Activated B cell treated with CpG ODN at 0.5 μM for 24 hours (primary cell): ENCODE measurements at regions of chr17 and their contacts with region 1.

Region 1: DNA sequence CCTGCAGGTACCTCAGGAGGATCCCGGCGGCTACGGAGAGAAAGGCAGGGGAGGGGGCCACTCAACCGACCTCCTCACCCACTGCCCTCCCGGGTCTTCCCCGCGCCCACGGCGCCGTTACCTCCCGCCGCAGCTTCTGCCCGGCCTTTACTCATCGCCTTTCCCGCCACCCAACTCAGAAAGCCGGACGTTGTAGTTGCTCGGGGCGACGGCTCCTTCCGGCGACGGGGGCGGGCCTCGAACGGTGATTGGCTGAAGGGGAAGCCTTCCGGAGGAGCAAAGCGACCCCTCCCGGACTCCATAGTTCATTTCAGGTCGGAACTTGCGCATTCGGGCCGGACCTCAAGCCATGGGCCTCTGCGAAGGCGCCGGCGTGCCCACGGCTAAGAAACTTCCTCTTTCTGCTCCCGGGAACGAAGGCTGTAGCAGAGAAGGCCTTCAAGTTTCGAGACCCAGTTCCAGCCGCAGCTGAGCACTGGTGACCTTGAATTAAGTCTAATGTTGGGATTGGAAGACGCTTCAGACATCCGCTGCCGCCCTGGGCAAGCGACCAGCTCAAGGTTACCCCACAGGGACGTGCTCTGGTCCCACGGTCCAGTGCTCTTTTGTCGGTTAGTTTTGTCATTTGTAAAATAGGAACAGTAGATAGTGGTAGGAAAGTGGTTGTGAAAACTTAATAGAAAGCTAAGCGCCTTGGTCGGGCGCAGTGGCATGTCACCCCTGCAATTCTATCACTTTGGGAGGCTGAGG is at the start of gene PSMC3IP:
- DNase-seq: peak; percentile 86
- ATAC-seq: peak; percentile 90
- H3K4me3 Mint-ChIP-seq: peak within 1 kb of the TSS; percentile 95
- H3K27ac Mint-ChIP-seq: peak within 1 kb of the TSS; percentile 97
- H3K4me1 Mint-ChIP-seq: peaks cover 38% of the 10 kb centered on the region
- H3K27me3 Mint-ChIP-seq: no peaks in the 10 kb centered on the region
- CTCF ChIP-seq: no peak
- total RNA-seq, gene PSMC3IP: 9.0 and 10.8 TPM in 2 replicates

Region 2: DNA sequence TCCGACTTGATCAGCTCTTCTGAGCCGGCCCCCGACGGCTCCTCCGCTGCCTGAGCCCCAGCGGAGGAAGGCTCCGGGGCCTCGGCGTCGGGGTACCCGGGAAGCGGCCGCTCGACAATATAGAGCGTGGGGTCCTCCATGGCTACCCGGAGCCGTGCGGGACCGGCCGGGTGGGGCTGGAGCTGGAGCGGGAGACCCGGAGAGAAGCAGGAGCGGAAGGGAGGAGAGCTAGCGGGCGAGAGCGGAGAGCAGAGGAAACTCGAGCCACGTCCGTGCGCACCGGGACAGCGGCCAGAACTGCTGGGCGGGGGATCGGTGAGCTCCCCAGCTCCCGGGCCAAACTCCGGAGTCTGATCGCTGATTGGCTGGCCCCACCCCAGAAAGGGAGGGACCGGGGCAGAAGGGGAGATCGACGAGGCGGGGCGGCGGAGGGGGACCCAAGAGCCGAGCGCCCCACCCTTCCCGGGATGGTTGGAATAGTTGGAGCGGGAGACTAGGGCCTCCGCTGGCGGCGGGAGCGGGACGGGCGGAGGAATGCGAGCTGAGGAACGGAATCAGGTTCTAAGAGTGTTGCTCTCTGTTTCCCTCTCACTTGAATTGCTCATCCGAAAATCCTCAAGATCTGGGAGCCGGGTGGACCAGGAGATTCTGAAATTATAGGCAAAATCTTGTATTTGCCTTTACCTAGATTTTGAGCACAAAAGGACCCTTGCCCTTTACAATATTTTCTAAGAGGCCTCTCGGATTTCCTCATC is 154.6 kb before region 1 on chr17 and contains the start of gene CAVIN1:
- CTCF ChIA-PET with region 1: no interaction called
- POLR2A ChIA-PET with region 1: no interaction called
- intact Hi-C with region 1: no loop called
- DNase-seq: no peak
- ATAC-seq: peak; percentile 25
- H3K4me3 Mint-ChIP-seq: peak within 1 kb of the TSS; percentile 86
- H3K27ac Mint-ChIP-seq: no peak within 1 kb of the TSS
- H3K4me1 Mint-ChIP-seq: peaks cover 17% of the 10 kb centered on the region
- H3K27me3 Mint-ChIP-seq: peaks cover 35% of the 10 kb centered on the region
- CTCF ChIP-seq: no peak
- total RNA-seq, gene CAVIN1: 0.10 and 0.20 TPM in 2 replicates

Region 3: GRCh38 chr17:42548070-42548837 is 29.5 kb before region 1 on chr17:
- CTCF ChIA-PET with region 1: interaction called, 19 read pairs
- POLR2A ChIA-PET with region 1: interaction called, 11 read pairs
- intact Hi-C with region 1: no loop called
- DNase-seq: peak; percentile 81
- ATAC-seq: peak; percentile 97
- H3K4me3 Mint-ChIP-seq: peak overlapping the region; percentile 66
- H3K27ac Mint-ChIP-seq: no peak overlapping the region
- H3K4me1 Mint-ChIP-seq: peaks cover 17% of the 10 kb centered on the region
- H3K27me3 Mint-ChIP-seq: no peaks in the 10 kb centered on the region
- CTCF ChIP-seq: no peak

Region 4: GRCh38 chr17:42598905-42599304 is 21.2 kb after region 1 on chr17:
- CTCF ChIA-PET with region 1: interaction called, 10 read pairs
- POLR2A ChIA-PET with region 1: interaction called, 5 read pairs
- intact Hi-C with region 1: no loop called
- DNase-seq: no peak
- ATAC-seq: no peak
- H3K4me3 Mint-ChIP-seq: no peak overlapping the region
- H3K27ac Mint-ChIP-seq: no peak overlapping the region
- H3K4me1 Mint-ChIP-seq: peaks cover 26% of the 10 kb centered on the region
- H3K27me3 Mint-ChIP-seq: no peaks in the 10 kb centered on the region
- CTCF ChIP-seq: no peak

Region 5: GRCh38 chr17:42704837-42705494 is 127.3 kb after region 1 on chr17:
- CTCF ChIA-PET with region 1: interaction called, 5 read pairs
- POLR2A ChIA-PET with region 1: interaction called, 15 read pairs
- intact Hi-C with region 1: loop called (anchors 2 kb)
- DNase-seq: no peak
- ATAC-seq: peak; percentile 78
- H3K4me3 Mint-ChIP-seq: peak overlapping the region; percentile 74
- H3K27ac Mint-ChIP-seq: peak overlapping the region; percentile 94
- H3K4me1 Mint-ChIP-seq: peaks cover 61% of the 10 kb centered on the region
- H3K27me3 Mint-ChIP-seq: no peaks in the 10 kb centered on the region
- CTCF ChIP-seq: no peak

Region 6: DNA sequence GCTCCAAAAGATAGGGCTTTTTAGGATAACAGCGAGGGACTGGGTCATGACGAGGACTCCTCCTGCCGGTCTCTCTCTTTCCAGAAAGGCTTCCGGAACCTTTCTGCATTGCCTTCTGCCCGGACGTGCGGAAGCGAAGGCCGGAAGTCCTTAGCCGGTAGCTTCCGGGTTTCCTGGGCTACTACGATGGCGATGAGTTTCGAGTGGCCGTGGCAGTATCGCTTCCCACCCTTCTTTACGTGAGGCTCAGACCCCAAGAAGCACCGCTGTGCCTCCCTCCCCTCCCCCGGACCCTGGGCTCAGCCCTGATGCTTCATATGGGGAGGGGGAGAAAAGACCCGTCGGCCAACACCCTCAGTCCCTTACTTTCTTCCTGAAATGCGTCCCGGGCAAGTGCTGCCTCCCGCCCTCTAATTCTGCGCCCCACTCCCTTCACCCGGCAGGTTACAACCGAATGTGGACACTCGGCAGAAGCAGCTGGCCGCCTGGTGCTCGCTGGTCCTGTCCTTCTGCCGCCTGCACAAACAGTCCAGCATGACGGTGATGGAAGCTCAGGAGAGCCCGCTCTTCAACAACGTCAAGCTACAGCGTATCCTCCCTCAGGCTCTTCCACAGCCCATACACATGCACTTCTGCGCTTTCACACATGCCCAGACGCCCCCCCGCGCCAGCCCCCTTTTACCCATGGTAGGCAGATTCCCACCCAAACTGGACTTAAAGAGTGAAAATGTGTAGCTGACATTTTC is 195.8 kb after region 1 on chr17 and contains the start of gene VPS25:
- CTCF ChIA-PET with region 1: interaction called, 13 read pairs
- POLR2A ChIA-PET with region 1: interaction called, 21 read pairs
- intact Hi-C with region 1: no loop called
- DNase-seq: peak; percentile 71
- ATAC-seq: peak; percentile 92
- H3K4me3 Mint-ChIP-seq: peak within 1 kb of the TSS; percentile 98
- H3K27ac Mint-ChIP-seq: peak within 1 kb of the TSS; percentile 96
- H3K4me1 Mint-ChIP-seq: peaks cover 35% of the 10 kb centered on the region
- H3K27me3 Mint-ChIP-seq: no peaks in the 10 kb centered on the region
- CTCF ChIP-seq: no peak
- total RNA-seq, gene VPS25: 49.7 and 49.8 TPM in 2 replicates

Region 7: DNA sequence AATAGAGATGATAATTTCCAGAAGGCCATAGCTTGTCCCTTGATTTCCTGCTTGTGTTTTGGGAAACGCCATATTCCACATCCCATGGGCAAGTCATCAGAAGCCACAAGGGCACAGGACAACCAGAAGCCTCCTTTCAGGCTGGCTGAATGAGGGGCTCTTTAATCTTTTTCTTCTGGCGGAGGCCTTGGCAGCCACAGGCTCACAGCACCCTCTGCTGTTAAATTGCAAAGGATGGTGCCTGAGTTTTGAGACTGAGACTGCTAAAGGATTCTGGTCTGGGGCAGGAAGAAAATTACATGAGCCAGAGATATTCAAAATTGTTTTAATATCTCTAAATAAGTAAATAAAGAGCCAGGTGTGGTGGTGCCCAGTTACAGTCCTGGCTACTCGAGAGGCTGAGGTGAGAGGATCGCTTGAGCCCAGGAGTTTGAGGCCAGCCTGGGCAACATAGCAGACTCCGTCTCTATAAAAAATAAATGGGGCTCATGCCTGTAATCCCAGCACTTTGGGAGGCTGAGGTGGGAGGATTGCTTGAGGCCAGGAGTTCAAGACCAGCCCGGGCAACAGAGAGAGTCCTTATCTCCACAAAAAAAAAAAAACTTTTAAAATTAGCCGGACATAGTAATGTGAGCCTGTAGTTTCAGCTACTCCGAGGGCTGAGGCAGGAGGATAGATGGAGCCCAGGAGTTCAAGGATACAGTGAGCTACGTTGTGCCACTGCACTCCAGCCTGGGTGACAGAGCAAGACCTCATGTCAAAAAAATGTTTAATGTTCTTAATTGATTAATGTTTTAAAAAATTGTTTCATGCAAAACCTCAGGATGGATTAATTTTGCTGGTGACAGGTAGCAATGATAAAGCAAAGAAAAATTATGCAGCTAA is 360.2 kb after region 1 on chr17:
- CTCF ChIA-PET with region 1: interaction called, 3 read pairs
- POLR2A ChIA-PET with region 1: no interaction called
- intact Hi-C with region 1: loop called (anchors 1 kb)
- DNase-seq: no peak
- ATAC-seq: peak; percentile 49
- H3K4me3 Mint-ChIP-seq: no peak overlapping the region
- H3K27ac Mint-ChIP-seq: no peak overlapping the region
- H3K4me1 Mint-ChIP-seq: no peaks in the 10 kb centered on the region
- H3K27me3 Mint-ChIP-seq: no peaks in the 10 kb centered on the region
- CTCF ChIP-seq: no peak